ENCODE measurements at regions of chr9 and their contacts with region 1.

Region 1: DNA sequence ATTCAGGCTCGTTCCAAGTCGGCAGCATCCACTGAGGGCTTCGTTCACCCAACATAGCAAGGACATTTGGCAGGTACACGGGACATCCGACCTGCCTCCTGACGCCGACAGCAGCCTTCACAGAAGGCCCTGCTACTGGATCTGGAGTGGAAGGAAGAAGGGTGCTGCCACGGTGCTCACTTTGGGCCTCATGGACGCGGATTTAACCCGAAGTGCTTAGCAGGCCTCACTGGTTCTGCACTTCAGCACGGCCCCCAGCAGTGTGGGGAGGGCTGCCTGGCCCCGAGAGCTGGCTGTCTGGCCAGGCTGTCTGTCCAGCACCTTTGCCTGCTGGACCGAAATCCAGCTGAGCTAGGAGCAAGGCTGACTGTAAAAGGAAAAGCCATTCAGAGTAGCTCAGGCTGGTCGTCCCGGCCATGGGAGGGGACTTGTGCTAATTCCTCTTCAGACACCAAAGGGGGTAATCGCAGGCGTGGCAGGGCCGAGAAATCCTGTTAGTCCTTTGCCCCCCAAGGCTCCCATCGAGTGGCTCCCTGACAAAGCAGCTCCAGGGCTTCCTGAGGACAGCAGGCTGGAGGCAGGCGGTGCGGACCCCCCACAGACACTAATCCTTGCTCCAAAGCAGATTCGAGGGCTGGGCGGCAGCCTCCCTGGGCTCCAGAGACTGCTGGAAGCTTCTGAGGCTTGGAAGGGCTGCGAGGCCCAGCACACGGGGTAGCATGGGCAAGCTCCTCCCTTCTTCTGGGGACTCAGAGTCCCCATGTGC is 11.1 kb upstream of the RXRA start:
- DNase-seq: no peak
- ATAC-seq: no peak
- H3K4me3 ChIP-seq: no peak overlapping the region
- H3K27ac ChIP-seq: no peak overlapping the region
- H3K4me1 ChIP-seq: no peaks in the 10 kb centered on the region
- H3K27me3 ChIP-seq: no peaks in the 10 kb centered on the region
- CTCF ChIP-seq: no peak

Region 2: GRCh38 chr9:134040781-134041648 is 274.1 kb before region 1 on chr9:
- CTCF ChIA-PET with region 1: no interaction called
- POLR2A ChIA-PET with region 1: no interaction called
- in situ Hi-C with region 1: no loop called
- intact Hi-C with region 1: no loop called
- DNase-seq: no peak
- ATAC-seq: no peak
- H3K4me3 ChIP-seq: no peak overlapping the region
- H3K27ac ChIP-seq: no peak overlapping the region
- H3K4me1 ChIP-seq: no peaks in the 10 kb centered on the region
- H3K27me3 ChIP-seq: no peaks in the 10 kb centered on the region
- CTCF ChIP-seq: no peak

Region 3: GRCh38 chr9:134433101-134433500 is 118.0 kb after region 1 on chr9:
- CTCF ChIA-PET with region 1: interaction called, 10 read pairs
- POLR2A ChIA-PET with region 1: no interaction called
- in situ Hi-C with region 1: no loop called
- intact Hi-C with region 1: no loop called
- DNase-seq: no peak
- ATAC-seq: 0 out of 2 replicates have a peak, but pooled peaks have one; percentile 11
- H3K4me3 ChIP-seq: no peak overlapping the region
- H3K27ac ChIP-seq: no peak overlapping the region
- H3K4me1 ChIP-seq: no peaks in the 10 kb centered on the region
- H3K27me3 ChIP-seq: no peaks in the 10 kb centered on the region
- CTCF ChIP-seq: no peak

Region 4: DNA sequence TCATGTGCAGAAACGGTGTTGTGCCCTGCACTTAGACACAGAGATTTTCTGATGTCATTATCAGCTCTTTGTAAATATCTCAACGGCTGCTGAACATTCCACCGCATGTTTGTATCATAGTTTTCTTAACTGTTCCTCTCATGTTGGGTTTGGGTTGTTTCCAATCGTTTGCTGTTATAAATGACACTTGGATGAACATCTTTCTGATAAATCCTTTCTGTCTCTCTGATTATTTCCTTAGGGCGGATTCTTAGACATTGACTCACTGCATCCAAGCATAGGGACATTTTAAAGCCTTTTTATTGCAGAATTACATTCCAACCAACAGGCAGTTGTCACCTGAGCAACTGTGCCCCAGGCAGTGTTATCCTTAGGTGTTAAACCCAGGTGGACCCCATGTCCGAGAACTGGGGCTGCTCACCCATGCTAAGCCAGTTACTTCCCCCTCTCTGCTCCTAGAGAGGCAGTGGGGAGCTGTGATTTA is 355.0 kb after region 1 on chr9:
- CTCF ChIA-PET with region 1: no interaction called
- POLR2A ChIA-PET with region 1: no interaction called
- in situ Hi-C with region 1: no loop called
- intact Hi-C with region 1: no loop called
- DNase-seq: no peak
- ATAC-seq: no peak
- H3K4me3 ChIP-seq: no peak overlapping the region
- H3K27ac ChIP-seq: no peak overlapping the region
- H3K4me1 ChIP-seq: peaks cover 2% of the 10 kb centered on the region
- H3K27me3 ChIP-seq: no peaks in the 10 kb centered on the region
- CTCF ChIP-seq: no peak

Measured in Panc1 (cell line).